ENCODE measurements at regions of chr6 and their contacts with region 1.

Region 1: DNA sequence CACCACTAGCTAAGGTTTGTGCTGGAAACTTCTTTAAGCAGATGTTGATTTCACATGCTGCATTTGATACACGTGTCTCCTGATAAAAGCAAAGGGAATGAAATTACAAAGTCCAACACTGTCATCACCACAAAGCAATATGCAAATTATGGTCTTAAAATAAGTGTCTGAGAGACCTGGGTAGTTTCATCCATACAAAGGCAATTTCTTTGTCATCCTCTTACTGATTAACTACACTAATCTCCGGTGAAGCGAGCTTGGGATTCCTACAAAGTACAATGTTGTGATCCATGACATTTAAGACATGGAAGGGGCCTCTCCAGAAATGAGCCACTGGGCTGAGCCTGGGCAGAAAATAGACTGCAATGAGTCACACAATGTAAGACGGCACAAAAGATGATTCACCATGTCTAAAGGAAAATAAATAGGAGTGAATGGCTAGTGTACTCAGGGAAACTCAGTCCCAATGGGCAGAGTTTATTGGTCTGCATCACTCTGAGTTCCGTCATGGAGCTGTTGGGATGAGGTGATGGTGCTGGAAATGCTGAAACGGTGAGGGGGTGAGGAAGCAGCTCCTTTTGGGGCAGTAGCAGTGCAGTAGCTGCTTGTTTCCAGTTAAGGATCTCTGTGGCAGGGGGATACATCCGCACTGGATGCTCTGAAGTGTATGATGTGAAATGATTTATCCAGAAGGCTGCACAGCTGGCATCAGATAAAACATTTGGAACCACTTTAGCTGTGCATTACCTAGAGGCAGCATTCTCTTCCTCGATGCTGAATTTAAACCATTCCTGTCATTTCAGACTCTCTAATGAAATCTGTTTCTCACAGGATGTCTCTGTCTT is 103.3 kb downstream of the IBTK start:
- DNase-seq: peak; percentile 96
- H3K4me3 ChIP-seq: no peak overlapping the region
- H3K27ac ChIP-seq: peak overlapping the region; percentile 88
- H3K4me1 ChIP-seq: peaks cover 23% of the 10 kb centered on the region
- H3K27me3 ChIP-seq: no peaks in the 10 kb centered on the region
- CTCF ChIP-seq: no peak

Region 2: GRCh38 chr6:80610846-80611245 is 1533.4 kb before region 1 on chr6:
- CTCF ChIA-PET with region 1: interaction called, 11 read pairs
- dilution Hi-C with region 1: no loop called
- in situ Hi-C with region 1: no loop called
- intact Hi-C with region 1: no loop called
- DNase-seq: peak; percentile 69
- H3K4me3 ChIP-seq: no peak overlapping the region
- H3K27ac ChIP-seq: peak overlapping the region; percentile 23
- H3K4me1 ChIP-seq: peaks cover 34% of the 10 kb centered on the region
- H3K27me3 ChIP-seq: no peaks in the 10 kb centered on the region
- CTCF ChIP-seq: no peak

Region 3: DNA sequence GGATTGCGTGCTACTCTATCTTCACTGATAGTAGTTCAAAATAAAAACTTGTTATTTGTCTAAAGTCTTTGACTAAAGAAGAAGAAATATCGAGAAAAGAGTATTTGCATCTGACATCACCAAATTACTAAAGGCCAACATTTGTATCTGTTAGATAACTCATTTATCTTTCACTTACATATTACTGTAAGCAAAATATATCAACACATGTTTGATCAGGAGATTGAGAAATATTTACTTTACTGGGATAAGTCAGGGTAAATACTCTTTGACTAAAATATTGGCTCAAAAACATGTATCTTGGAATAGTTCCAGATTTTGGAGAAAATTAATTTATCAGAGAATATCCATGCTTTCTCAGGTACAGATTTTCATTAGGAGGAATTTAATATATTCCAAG is 697.7 kb before region 1 on chr6:
- CTCF ChIA-PET with region 1: no interaction called
- dilution Hi-C with region 1: no loop called
- in situ Hi-C with region 1: no loop called
- intact Hi-C with region 1: no loop called
- DNase-seq: no peak
- H3K4me3 ChIP-seq: no peak overlapping the region
- H3K27ac ChIP-seq: no peak overlapping the region
- H3K4me1 ChIP-seq: no peaks in the 10 kb centered on the region
- H3K27me3 ChIP-seq: no peaks in the 10 kb centered on the region
- CTCF ChIP-seq: no peak

Measured in mammary epithelial cell (primary cell).